A549 (cell line): ENCODE measurements at regions of chr16 and their contacts with region 1.

Region 1: DNA sequence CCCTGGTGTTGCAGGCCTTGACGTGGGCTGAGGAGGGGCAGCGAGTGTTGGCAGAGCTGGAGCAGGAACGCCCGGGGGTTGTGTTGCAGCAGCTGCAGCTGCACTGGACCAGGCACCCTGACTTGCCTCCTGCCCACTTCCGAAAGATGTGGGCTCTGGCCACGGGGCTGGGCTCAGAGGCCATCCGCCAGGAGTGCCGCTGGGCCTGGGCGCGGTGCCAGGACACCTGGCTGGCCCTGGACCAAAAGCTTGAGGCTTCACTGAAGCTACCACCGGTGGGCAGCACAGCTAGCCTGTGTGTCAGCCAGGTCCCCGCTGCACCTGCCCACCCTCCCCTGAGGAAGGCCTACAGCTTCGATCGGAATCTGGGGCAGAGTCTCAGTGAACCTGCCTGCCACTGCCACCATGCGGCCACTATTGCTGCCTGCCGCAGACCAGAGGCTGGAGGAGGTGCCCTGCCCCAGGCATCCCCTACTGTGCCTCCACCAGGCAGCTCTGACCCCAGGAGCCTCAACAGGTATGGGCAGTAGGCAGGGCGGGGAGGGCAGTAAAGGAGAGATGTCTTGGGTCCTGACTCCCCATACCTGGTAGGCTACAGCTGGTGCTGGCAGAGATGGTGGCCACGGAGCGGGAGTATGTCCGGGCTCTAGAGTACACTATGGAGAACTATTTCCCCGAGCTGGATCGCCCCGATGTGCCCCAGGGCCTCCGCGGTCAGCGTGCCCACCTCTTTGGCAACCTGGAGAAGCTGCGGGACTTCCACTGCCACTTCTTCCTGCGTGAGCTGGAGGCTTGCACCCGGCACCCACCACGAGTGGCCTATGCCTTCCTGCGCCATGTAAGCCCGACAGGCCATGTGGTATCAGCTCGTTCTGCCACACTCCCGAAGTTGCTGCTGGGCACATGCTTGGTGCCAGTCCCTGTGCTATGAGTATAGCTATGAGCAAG is 5.6 kb downstream of the PLEKHG4 start:
- DNase-seq: peak; percentile 44 to 61
- ATAC-seq: peak; percentile 63 to 88; a peak in 5 of 6 replicates
- H3K4me3 ChIP-seq: no peak overlapping the region
- H3K27ac ChIP-seq: no peak overlapping the region
- H3K4me1 ChIP-seq: peaks cover 14% of the 10 kb centered on the region; the same call in 2 of the 3 replicates
- CTCF ChIP-seq: peak; percentile 48
- EP300 ChIP-seq: no peak
- POLR2A ChIP-seq: no peak
- RAD21 ChIP-seq: peak; percentile 39 to 57

Region 2: GRCh38 chr16:67296422-67296821 is 11.4 kb after region 1 on chr16:
- CTCF ChIA-PET with region 1: interaction called, 31 read pairs
- POLR2A ChIA-PET with region 1: no interaction called
- DNase-seq: no peak
- ATAC-seq: no peak
- H3K4me3 ChIP-seq: no peak overlapping the region
- H3K27ac ChIP-seq: no peak overlapping the region
- H3K4me1 ChIP-seq: no peaks in the 10 kb centered on the region
- CTCF ChIP-seq: no peak
- EP300 ChIP-seq: no peak
- POLR2A ChIP-seq: no peak
- RAD21 ChIP-seq: no peak

Region 3: DNA sequence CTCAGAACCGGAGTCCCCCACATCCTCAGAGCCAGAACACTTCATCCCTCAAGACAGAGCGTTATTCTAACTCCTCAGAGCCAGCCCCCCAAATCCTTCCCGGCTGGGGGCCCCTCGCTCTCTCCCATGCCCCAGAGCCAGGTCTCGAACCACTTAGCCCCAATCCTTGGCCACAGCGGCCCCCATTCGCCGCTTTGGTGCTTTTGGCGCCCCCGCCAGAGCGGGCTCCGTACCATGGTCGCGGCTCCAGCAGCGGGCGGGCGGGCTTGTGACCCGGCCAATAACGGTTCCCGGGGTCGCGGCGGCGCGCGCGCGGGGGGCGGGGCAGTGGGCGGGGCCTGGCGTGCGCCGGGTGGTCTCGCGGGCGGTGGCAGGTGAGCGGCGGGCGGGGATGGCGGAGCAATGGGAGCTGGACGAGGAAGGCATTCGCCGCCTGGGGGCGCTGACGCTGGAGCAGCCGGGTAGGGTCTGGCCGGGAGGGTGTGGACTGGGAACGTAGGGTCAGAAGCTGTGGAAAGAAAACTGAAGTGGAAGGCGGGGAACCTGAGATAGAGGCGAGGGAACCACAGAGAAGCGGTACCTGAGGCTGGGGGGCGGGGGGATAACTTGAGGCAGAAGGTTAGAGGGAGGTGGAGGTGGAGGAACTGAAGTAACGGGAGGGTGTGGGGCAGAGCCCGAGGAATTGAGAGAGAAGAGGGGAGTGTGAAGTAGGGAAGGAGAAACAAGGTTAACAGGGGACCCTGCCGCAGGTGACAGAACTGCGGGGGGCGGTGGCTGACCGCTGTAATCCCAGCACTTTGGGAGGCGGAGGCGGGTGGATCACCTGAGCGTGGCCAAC is 41.7 kb after region 1 on chr16 and contains the starts of genes KCTD19 and LRRC36:
- CTCF ChIA-PET with region 1: interaction called, 34 read pairs
- POLR2A ChIA-PET with region 1: no interaction called
- DNase-seq: peak; percentile 80 to 93
- ATAC-seq: peak; percentile 99
- H3K4me3 ChIP-seq: peak within 1 kb of the TSS; percentile 60
- H3K27ac ChIP-seq: peak within 1 kb of the TSS; percentile 70 to 82
- H3K4me1 ChIP-seq: peaks cover 15% of the 10 kb centered on the region
- CTCF ChIP-seq: peak; percentile 62
- EP300 ChIP-seq: no peak
- POLR2A ChIP-seq: no peak
- RAD21 ChIP-seq: peak; percentile 39 to 61
- polyA plus RNA-seq, gene KCTD19: 1.1 and 2.4 TPM in 2 replicates
- polyA plus RNA-seq, gene LRRC36: 0.57 and 0.93 TPM in 2 replicates

Region 4: DNA sequence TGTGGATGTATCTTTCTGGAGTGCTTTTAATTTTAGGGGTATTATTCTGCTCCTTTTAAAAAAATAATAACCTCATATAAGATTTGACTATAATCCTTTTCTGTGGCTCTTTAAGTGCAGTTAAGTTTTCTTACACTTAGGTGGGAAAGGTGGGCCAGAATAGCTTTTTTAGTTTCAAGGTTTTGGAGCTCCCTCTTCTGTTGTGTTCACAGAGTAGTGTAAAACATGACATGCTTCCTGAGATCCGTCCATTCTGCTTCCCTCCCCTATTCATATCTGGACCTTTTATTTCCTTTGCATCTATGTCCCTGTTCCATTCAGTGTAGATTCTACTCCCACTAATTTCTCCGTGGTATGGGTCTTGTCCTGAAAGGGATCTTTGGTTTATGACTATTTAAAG is 54.5 kb after region 1 on chr16:
- CTCF ChIA-PET with region 1: interaction called, 10 read pairs
- POLR2A ChIA-PET with region 1: no interaction called
- DNase-seq: peak in 1 of 2 experiments; percentile 45
- ATAC-seq: peak; percentile 59 to 75; a peak in 5 of 6 replicates
- H3K4me3 ChIP-seq: no peak overlapping the region
- H3K27ac ChIP-seq: no peak overlapping the region
- H3K4me1 ChIP-seq: no peaks in the 10 kb centered on the region
- CTCF ChIP-seq: peak; percentile 37
- EP300 ChIP-seq: no peak
- POLR2A ChIP-seq: no peak
- RAD21 ChIP-seq: peak; percentile 53 to 62; a peak in 4 of 5 replicates

Region 5: DNA sequence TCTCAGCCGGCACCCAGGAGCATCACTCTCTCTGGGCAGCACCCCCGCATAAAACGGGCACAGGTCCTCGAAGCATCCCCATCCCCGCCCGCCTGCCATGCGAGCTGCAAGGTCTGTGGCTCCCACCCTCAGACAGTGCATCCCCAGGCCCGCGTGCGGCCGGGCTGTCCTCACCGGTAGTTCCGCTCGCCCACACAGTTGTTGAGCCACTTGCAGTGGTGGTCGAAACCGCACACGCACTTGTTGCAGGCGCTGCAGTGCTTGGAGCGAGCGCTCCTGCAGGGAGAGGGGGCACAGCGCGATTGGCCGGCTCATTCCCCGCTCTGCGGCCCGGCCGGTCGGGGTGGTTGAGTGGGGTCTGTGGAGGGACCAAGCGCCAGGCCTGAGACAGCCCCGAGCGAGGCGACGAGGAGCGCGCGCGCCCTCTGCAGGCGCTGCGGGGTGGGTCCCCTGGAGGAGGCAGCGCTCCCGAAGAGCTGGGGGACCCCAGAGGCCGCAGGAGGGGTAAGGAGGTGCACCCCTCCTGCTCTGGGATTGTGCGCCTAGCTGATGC is 114.3 kb after region 1 on chr16:
- CTCF ChIA-PET with region 1: interaction called, 18 read pairs
- POLR2A ChIA-PET with region 1: interaction called, 3 read pairs
- DNase-seq: peak; percentile 37 to 52
- ATAC-seq: peak; percentile 51 to 83
- H3K4me3 ChIP-seq: no peak overlapping the region
- H3K27ac ChIP-seq: no peak overlapping the region
- H3K4me1 ChIP-seq: peaks cover 15% of the 10 kb centered on the region
- CTCF ChIP-seq: peak; percentile 62
- EP300 ChIP-seq: no peak
- POLR2A ChIP-seq: no peak
- RAD21 ChIP-seq: peak; percentile 63 to 70

Region 6: GRCh38 chr16:67415872-67416793 is 131.2 kb after region 1 on chr16 and contains the start of gene ZDHHC1:
- CTCF ChIA-PET with region 1: interaction called, 19 read pairs
- POLR2A ChIA-PET with region 1: no interaction called
- DNase-seq: peak; percentile 78 to 89
- ATAC-seq: peak; percentile 94 to 96
- H3K4me3 ChIP-seq: peak within 1 kb of the TSS; percentile 80
- H3K27ac ChIP-seq: peak within 1 kb of the TSS; percentile 91 to 96
- H3K4me1 ChIP-seq: peaks cover 9% of the 10 kb centered on the region; the same call in 2 of the 3 replicates
- CTCF ChIP-seq: peak; percentile 70
- EP300 ChIP-seq: no peak
- POLR2A ChIP-seq: peak; percentile 49; the same call in 1 of the 2 replicates
- RAD21 ChIP-seq: peak; percentile 49 to 69
- polyA plus RNA-seq, gene ZDHHC1: 3.5 and 3.8 TPM in 2 replicates

Region 7: GRCh38 chr16:67530013-67530939 is 245.3 kb after region 1 on chr16:
- CTCF ChIA-PET with region 1: no interaction called
- POLR2A ChIA-PET with region 1: no interaction called
- DNase-seq: no peak
- ATAC-seq: peak; percentile 17 to 60; a peak in 3 of 6 replicates
- H3K4me3 ChIP-seq: peak overlapping the region; percentile 73
- H3K27ac ChIP-seq: peak overlapping the region; percentile 81 to 93
- H3K4me1 ChIP-seq: peaks cover 43% of the 10 kb centered on the region
- CTCF ChIP-seq: no peak
- EP300 ChIP-seq: no peak
- POLR2A ChIP-seq: no peak
- RAD21 ChIP-seq: no peak